K562 (cell line): ENCODE measurements at regions of chr7 and their contacts with region 1.

Region 1: DNA sequence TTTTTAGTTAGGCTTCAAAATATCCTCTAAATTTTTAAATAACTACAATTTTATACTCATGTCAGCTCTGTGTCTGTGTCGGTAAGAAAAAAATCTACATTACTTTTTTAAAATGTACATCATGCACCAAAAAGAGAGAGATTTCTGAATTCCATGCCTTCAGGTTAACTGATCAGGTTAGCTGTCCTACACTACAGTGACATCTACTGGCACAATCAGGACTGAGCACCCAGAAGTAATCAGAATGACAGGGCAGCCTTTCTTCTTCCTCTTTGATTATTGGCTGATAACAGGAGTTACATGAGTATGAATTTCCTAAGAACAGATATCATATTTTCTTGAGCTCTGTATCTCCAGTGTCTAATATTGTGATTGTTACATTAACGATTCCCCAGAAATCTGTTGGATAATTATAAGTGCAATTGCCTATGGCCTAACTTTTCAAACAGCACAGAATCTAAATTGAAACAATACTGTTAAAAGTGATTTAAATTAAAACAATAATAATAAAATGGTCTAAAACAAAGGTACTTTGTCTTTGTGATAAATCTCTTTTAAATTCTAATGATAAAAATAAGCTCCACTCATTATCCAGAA is 41.8 kb upstream of the HYCC1 start:
- DNase-seq: peak; percentile 62 to 81 (median 67)
- ATAC-seq: peak; percentile 91
- H3K4me3 ChIP-seq: no peak overlapping the region
- H3K27ac ChIP-seq: no peak overlapping the region
- H3K4me1 ChIP-seq: no peaks in the 10 kb centered on the region; a peak in 2 of 5 replicates
- H3K27me3 ChIP-seq: no peaks in the 10 kb centered on the region
- CTCF ChIP-seq: peak; percentile 84 to 95 (median 86)
- EP300 ChIP-seq: 0 out of 2 replicates have a peak, but pooled peaks have one; percentile 12
- POLR2A ChIP-seq: no peak
- RAD21 ChIP-seq: peak; percentile 97

Region 2: GRCh38 chr7:22559829-22560489 is 495.7 kb before region 1 on chr7:
- CTCF ChIA-PET with region 1: interaction called, 17 read pairs
- POLR2A ChIA-PET with region 1: no interaction called
- in situ Hi-C with region 1: no loop called
- intact Hi-C with region 1: loop called (anchors 1 kb)
- DNase-seq: peak; percentile 75 to 88 (median 80)
- ATAC-seq: peak; percentile 83
- H3K4me3 ChIP-seq: no peak overlapping the region
- H3K27ac ChIP-seq: no peak overlapping the region
- H3K4me1 ChIP-seq: peaks cover 15 to 36% of the 10 kb centered on the region in 2 experiments
- H3K27me3 ChIP-seq: no peaks in the 10 kb centered on the region
- CTCF ChIP-seq: peak; percentile 91 to 99 (median 99)
- EP300 ChIP-seq: no peak
- POLR2A ChIP-seq: no peak
- RAD21 ChIP-seq: peak; percentile 92 to 95

Region 3: DNA sequence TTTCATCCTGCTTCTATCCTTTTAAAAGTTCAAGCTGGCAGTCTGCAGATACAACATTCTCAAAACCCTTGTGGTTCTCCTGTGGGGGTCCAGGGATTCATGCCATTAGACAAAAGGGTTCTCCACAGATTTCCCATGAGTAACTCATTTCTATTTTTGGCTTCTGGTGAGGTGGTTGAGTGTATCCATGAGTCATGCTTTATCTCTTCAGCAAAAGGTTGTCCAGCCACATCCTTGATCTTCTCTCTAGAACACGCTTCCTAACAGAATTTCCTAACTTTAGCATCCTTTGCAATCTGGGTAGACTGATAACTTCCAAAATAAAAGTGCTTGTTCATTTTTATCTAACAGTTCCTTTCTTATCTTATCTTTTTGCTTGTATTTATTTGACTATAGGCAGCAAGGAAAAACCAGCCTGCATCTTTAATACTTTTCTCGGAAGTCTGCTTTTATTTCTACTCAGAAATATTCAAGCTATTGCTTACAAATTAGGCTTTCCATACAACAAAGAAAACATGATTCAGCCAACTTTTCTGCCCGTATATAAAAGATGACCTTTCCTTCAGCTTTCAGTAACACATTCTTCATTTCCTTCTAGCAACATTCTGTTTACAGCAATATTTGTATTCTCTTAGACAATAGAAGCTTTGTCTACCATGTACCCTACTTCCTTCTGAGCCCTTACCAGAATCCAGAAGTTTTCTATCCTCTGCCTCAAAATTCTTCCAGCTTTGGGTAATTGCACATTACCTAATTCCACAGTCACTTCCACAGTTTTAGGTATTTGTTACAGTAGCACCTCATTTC is 408.0 kb before region 1 on chr7:
- CTCF ChIA-PET with region 1: no interaction called
- POLR2A ChIA-PET with region 1: no interaction called
- in situ Hi-C with region 1: no loop called
- intact Hi-C with region 1: no loop called
- DNase-seq: peak in 3 of 4 experiments; percentile 22 to 70 (median 28)
- ATAC-seq: peak; percentile 74
- H3K4me3 ChIP-seq: no peak overlapping the region
- H3K27ac ChIP-seq: peak overlapping the region; percentile 53
- H3K4me1 ChIP-seq: peaks cover 0 to 14% of the 10 kb centered on the region in 2 experiments; a peak in 2 of 5 replicates
- H3K27me3 ChIP-seq: no peaks in the 10 kb centered on the region
- CTCF ChIP-seq: no peak
- EP300 ChIP-seq: peak; percentile 93
- POLR2A ChIP-seq: no peak
- RAD21 ChIP-seq: no peak

Region 4: DNA sequence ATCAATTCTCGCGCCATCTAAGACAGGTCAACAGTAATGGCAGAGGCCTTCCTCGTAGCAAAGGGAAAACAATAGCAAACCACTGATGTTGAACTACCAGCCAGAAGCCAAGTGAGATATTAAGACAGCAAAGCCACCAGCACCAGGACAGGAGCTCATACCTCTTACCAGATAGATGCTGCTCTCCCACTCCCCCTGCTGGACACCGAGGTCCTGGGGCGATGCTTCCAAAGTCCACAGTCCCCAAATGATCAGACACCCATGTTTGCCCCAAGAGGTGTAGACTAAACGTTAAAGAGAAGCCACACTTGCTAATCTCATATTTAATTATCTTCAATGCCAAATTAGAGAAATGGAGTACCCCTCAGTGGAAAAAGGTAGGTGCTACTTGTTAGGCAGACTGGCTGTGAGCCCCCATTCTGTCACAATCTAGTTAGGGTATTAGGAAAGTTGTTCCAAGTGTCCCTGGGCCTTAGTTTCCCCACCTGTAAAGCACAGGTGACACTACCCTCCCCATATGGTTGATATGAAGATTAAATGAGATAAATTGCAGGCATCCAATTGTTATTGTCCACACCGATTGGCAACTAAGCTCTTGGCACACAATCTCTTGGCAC is 273.0 kb before region 1 on chr7:
- CTCF ChIA-PET with region 1: no interaction called
- POLR2A ChIA-PET with region 1: no interaction called
- in situ Hi-C with region 1: no loop called
- intact Hi-C with region 1: loop called (anchors 5 kb)
- DNase-seq: peak; percentile 79 to 86 (median 83)
- ATAC-seq: peak; percentile 99
- H3K4me3 ChIP-seq: no peak overlapping the region
- H3K27ac ChIP-seq: no peak overlapping the region
- H3K4me1 ChIP-seq: peaks cover 0 to 5% of the 10 kb centered on the region in 2 experiments; a peak in 1 of 5 replicates
- H3K27me3 ChIP-seq: no peaks in the 10 kb centered on the region
- CTCF ChIP-seq: peak; percentile 88 to 96 (median 91)
- EP300 ChIP-seq: no peak; the same call in 1 of the 2 replicates
- POLR2A ChIP-seq: no peak
- RAD21 ChIP-seq: peak; percentile 78 to 87

Region 5: GRCh38 chr7:22822486-22823141 is 233.1 kb before region 1 on chr7 and contains the start of gene TOMM7:
- CTCF ChIA-PET with region 1: interaction called, 5 read pairs
- POLR2A ChIA-PET with region 1: no interaction called
- in situ Hi-C with region 1: no loop called
- intact Hi-C with region 1: loop called (anchors 10 kb)
- DNase-seq: peak; percentile 93 to 98 (median 94)
- ATAC-seq: peak; percentile 87
- H3K4me3 ChIP-seq: peak within 1 kb of the TSS; percentile 56
- H3K27ac ChIP-seq: peak within 1 kb of the TSS; percentile 84
- H3K4me1 ChIP-seq: peaks cover 17 to 27% of the 10 kb centered on the region in 2 experiments; a peak in 4 of 5 replicates
- H3K27me3 ChIP-seq: no peaks in the 10 kb centered on the region
- CTCF ChIP-seq: peak; percentile 21 to 32 (median 32); a peak in 3 of 6 replicates
- EP300 ChIP-seq: no peak
- POLR2A ChIP-seq: peak; percentile 89
- RAD21 ChIP-seq: no peak
- polyA plus RNA-seq, gene TOMM7: 787 to 797 TPM

Region 6: DNA sequence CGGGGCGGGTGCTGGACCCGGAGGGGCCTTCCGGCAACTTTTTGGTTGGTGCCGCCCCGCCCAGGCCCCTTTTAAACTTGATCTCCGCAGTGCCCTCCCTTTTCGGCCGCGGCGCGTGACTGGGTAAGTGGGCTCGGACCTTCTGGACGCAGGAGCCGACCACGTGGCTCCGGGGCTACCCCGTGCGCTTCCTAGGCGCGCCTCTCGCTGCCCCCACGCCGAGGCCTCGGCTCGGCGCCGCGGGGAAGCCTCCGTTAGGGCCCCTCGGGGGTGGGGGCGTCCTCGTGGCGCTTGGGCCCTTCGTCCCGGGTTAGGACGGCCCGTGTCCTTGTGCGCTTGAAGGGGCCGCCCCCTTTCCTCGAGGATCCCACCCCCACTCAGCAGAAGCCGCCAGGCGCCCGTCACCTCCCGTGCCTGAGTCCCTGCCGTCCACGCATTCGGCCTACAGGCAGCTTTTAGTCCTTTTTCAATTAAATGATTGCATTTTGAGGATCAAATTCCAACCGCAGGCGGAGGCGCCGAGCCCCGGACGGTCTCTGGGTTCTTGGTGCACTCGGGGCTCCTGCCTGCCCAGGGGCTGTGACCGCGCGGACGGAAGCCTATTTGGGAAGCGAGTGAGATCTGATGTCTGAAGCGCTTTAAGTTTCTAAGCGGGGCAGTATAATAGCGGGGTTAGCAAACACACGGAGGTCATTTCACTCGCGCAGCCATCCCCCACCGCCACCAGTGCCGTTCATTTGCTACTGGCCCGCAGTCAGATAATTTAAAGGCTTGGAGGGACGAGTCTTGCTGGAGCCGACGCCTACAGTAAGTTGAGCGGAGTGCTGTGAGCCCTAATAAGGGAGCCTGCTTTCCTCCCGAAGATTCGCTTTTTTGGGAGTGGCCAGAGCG is 201.3 kb before region 1 on chr7:
- CTCF ChIA-PET with region 1: no interaction called
- POLR2A ChIA-PET with region 1: interaction called, 4 read pairs
- in situ Hi-C with region 1: no loop called
- intact Hi-C with region 1: loop called (anchors 2 kb)
- DNase-seq: peak; percentile 95 to 96 (median 96)
- ATAC-seq: peak; percentile 85
- H3K4me3 ChIP-seq: peak overlapping the region; percentile 56
- H3K27ac ChIP-seq: peak overlapping the region; percentile 90
- H3K4me1 ChIP-seq: peaks cover 17 to 31% of the 10 kb centered on the region in 2 experiments
- H3K27me3 ChIP-seq: no peaks in the 10 kb centered on the region
- CTCF ChIP-seq: peak in 1 of 3 experiments; percentile 40; a peak in 1 of 6 replicates
- EP300 ChIP-seq: no peak
- POLR2A ChIP-seq: peak; percentile 84
- RAD21 ChIP-seq: 0 out of 4 replicates have a peak, but pooled peaks of 1 of the 2 experiments have one; percentile 13

Region 7: GRCh38 chr7:22979861-22980260 is 75.8 kb before region 1 on chr7:
- CTCF ChIA-PET with region 1: no interaction called
- POLR2A ChIA-PET with region 1: no interaction called
- in situ Hi-C with region 1: no loop called
- intact Hi-C with region 1: loop called (anchors 1 kb)
- DNase-seq: no peak
- ATAC-seq: no peak
- H3K4me3 ChIP-seq: no peak overlapping the region
- H3K27ac ChIP-seq: no peak overlapping the region
- H3K4me1 ChIP-seq: peaks cover 0 to 2% of the 10 kb centered on the region in 2 experiments; a peak in 1 of 5 replicates
- H3K27me3 ChIP-seq: no peaks in the 10 kb centered on the region
- CTCF ChIP-seq: no peak
- EP300 ChIP-seq: no peak
- POLR2A ChIP-seq: no peak
- RAD21 ChIP-seq: no peak

Region 8: GRCh38 chr7:23013715-23014649 is 41.7 kb before region 1 on chr7 and contains the start of gene HYCC1:
- CTCF ChIA-PET with region 1: no interaction called
- POLR2A ChIA-PET with region 1: no interaction called
- in situ Hi-C with region 1: no loop called
- intact Hi-C with region 1: loop called (anchors 5 kb)
- DNase-seq: peak; percentile 98 to 99 (median 98)
- ATAC-seq: peak; percentile 98
- H3K4me3 ChIP-seq: peak within 1 kb of the TSS; percentile 83
- H3K27ac ChIP-seq: peak within 1 kb of the TSS; percentile 71
- H3K4me1 ChIP-seq: peaks cover 13 to 39% of the 10 kb centered on the region in 2 experiments; a peak in 4 of 5 replicates
- H3K27me3 ChIP-seq: no peaks in the 10 kb centered on the region
- CTCF ChIP-seq: peak; percentile 32 to 70 (median 58); a peak in 5 of 6 replicates
- EP300 ChIP-seq: no peak
- POLR2A ChIP-seq: peak; percentile 94
- RAD21 ChIP-seq: peak in 1 of 2 experiments; percentile 17; a peak in 2 of 4 replicates
- polyA plus RNA-seq, gene HYCC1: 11.2 to 16.0 TPM

Region 9: DNA sequence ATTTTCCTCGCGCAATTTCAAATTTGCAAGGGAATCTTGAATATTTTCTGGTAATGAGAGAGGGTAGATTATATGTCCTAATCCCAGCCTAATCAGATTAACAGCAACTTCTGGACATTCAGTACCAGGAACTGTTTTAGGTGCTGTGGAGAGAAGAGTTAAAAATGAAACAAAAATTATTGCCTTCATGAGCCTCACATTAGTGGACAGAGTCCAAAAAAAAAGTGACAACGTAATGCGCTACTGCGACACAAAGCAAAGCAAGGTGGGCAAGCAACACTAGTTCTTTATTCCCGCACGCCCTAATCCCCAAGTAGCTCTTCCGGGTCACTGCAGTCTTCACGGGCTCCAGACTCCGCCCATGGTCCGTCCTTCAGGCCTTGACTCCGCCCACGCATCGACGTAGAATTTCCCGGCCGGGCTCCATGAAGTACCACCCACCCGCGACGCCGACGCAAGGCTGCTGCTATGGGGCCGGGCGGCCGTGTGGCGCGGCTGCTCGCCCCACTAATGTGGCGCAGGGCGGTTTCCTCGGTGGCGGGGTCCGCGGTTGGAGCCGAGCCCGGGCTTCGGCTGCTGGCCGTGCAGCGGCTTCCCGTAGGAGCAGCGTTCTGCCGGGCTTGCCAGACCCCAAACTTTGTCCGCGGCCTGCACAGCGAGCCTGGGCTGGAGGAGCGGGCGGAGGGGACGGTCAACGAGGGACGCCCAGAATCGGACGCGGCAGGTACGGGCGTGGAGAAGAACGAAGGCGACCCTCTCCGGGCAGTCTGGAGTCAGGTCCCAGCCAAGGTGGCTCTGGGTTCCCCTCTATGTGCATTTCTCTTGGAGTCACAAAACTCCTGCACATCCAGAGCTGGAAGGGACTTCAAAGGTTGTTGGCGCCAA is 243.4 kb after region 1 on chr7 and contains the start of gene MALSU1:
- CTCF ChIA-PET with region 1: no interaction called
- POLR2A ChIA-PET with region 1: no interaction called
- in situ Hi-C with region 1: no loop called
- intact Hi-C with region 1: no loop called
- DNase-seq: peak; percentile 94 to 99 (median 95)
- ATAC-seq: peak; percentile 99
- H3K4me3 ChIP-seq: peak within 1 kb of the TSS; percentile 81
- H3K27ac ChIP-seq: peak within 1 kb of the TSS; percentile 62
- H3K4me1 ChIP-seq: peaks cover 0 to 13% of the 10 kb centered on the region in 2 experiments; a peak in 4 of 5 replicates
- H3K27me3 ChIP-seq: no peaks in the 10 kb centered on the region
- CTCF ChIP-seq: 0 out of 6 replicates have a peak, but pooled peaks of 1 of the 3 experiments have one; percentile 1
- EP300 ChIP-seq: no peak
- POLR2A ChIP-seq: peak; percentile 94
- RAD21 ChIP-seq: no peak
- polyA plus RNA-seq, gene MALSU1: 12.3 to 14.4 TPM